BJ (cell line): ENCODE measurements at regions of chr19 and their contacts with region 1.

Region 1: GRCh38 chr19:11964858-11965645 is at the start of gene ZNF763:
- DNase-seq: peak; percentile 50
- H3K4me3 ChIP-seq: peak within 1 kb of the TSS; percentile 46
- H3K27me3 ChIP-seq: no peaks in the 10 kb centered on the region
- CTCF ChIP-seq: no peak
- polyA plus RNA-seq, gene ZNF763: 1.6 and 2.2 TPM in 2 replicates

Region 2: GRCh38 chr19:11798391-11799330 is 166.4 kb before region 1 on chr19 and contains the start of gene ZNF491:
- CTCF ChIA-PET with region 1: interaction called, 11 read pairs
- POLR2A ChIA-PET with region 1: no interaction called
- DNase-seq: peak; percentile 49
- H3K4me3 ChIP-seq: peak within 1 kb of the TSS; percentile 68
- H3K27me3 ChIP-seq: no peaks in the 10 kb centered on the region
- CTCF ChIP-seq: peak; percentile 19; the same call in 1 of the 2 replicates
- polyA plus RNA-seq, gene ZNF491: 0.67 and 1.3 TPM in 2 replicates

Region 3: DNA sequence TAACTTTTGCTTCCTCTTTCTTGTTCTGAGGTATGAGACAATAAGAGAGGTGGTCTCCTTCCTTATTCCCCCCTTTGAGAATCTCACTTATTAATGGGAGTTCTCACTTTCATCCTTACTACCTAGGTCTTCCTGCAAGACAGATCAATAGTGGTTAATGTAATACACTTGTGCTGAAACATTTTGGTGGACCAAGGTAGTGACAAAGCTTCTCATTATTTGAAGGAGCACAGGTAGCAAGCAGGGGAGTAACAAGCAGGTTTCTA is 22.3 kb before region 1 on chr19:
- CTCF ChIA-PET with region 1: interaction called, 13 read pairs
- POLR2A ChIA-PET with region 1: no interaction called
- DNase-seq: no peak
- H3K4me3 ChIP-seq: no peak overlapping the region
- H3K27me3 ChIP-seq: no peaks in the 10 kb centered on the region
- CTCF ChIP-seq: no peak

Region 4: DNA sequence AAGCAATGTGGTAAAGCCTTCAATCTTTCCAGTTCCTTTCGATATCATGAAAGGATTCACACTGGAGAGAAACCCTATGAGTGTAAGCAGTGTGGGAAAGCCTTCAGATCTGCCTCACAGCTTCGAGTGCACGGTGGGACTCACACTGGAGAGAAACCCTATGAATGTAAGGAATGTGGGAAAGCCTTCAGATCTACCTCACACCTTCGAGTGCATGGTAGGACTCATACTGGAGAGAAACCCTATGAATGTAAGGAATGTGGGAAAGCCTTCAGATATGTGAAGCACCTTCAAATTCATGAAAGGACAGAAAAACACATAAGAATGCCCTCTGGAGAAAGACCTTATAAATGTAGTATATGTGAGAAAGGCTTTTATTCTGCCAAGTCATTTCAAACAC is 15.9 kb before region 1 on chr19:
- CTCF ChIA-PET with region 1: interaction called, 13 read pairs
- POLR2A ChIA-PET with region 1: no interaction called
- DNase-seq: no peak
- H3K4me3 ChIP-seq: no peak overlapping the region
- H3K27me3 ChIP-seq: no peaks in the 10 kb centered on the region
- CTCF ChIP-seq: no peak